ENCODE measurements at regions of chr12 and their contacts with region 1.

Region 1: GRCh38 chr12:113462117-113462774 is 9.4 kb downstream of the LHX5 start:
- DNase-seq: peak; percentile 84
- CTCF ChIP-seq: peak; percentile 83

Region 2: DNA sequence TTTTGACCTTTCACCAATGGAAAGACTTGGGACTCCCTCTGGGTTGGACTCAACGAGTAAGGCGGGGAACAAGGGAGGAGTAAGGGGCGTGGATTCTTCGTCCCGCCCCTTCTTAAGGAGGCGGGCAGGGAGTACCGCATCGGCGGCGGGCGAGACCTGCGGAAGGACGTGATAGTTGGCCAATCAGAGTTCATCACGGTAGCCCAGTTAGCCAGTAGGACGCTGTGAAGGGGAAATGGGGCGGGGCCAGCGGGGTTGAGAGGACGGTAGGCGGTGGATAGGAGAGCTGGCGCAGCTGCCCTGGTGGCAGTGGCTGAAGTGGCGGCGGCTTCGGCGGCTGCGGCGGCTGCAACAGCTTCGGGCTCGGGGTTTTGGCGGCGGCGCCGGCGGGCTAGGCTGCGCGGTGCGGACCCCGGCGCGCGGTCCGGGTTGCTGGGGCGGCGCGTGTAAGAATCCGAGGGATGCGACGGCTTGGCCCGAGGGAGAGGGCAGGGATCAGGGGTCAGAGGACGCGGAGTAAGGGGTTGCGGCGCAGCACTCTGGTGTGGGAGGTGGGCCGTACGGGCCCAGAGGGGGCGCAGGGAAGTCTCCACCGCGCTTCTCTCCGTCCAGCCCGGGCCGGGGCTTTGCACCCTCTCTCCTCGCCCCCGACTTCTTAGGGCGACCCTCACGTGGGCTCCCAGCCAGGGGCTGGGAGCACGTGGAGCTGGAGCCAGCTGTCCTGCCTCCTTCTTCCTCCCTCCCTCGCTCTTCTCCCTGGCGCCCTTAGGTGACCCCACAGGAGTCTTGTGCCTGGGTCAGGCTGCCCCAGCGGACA is 240.9 kb before region 1 on chr12 and contains the start of gene TPCN1:
- in situ Hi-C with region 1: no loop called
- DNase-seq: peak; percentile 96
- CTCF ChIP-seq: no peak

Region 3: GRCh38 chr12:113403435-113404415 is 58.5 kb before region 1 on chr12 and contains the start of gene SDS:
- in situ Hi-C with region 1: no loop called
- DNase-seq: no peak
- CTCF ChIP-seq: no peak

Region 4: DNA sequence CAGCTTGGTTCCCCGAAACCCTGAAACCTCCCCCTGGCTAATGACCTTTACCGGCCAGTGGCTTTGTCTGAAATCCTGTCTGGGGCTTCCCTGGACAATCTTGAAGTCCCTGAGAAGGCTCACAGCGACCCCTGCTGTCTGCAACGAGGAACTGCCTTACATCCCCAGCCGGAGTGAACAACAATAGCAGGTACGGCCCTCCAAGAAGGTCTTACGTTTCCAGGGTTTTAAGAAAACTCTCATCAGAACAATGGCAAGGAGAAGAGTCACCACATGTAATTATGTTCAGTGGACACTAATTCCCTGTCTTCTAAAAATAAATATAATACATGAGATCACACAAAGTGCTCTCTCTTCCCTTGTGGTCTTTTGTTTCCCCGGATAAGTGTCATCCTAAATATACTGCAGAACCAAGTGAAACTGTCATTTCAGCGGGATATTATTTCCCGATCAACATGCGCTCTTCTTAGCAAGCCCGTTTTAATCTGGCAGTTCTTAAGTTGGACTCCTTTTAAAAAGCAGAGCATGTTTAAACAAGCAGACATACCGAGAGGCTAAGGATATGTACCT is 450.6 kb after region 1 on chr12:
- in situ Hi-C with region 1: loop called (anchors 25 kb)
- DNase-seq: peak; percentile 81
- CTCF ChIP-seq: peak; percentile 74

Region 5: GRCh38 chr12:114403011-114403689 is 940.9 kb after region 1 on chr12:
- in situ Hi-C with region 1: loop called (anchors 25 kb)
- DNase-seq: peak; percentile 15
- CTCF ChIP-seq: no peak

Measured in GM13976 (cell line).